Right ventricle myocardium superior (tissue), 1 donor: ENCODE measurements at regions of chr10 and their contacts with region 1.

Region 1: DNA sequence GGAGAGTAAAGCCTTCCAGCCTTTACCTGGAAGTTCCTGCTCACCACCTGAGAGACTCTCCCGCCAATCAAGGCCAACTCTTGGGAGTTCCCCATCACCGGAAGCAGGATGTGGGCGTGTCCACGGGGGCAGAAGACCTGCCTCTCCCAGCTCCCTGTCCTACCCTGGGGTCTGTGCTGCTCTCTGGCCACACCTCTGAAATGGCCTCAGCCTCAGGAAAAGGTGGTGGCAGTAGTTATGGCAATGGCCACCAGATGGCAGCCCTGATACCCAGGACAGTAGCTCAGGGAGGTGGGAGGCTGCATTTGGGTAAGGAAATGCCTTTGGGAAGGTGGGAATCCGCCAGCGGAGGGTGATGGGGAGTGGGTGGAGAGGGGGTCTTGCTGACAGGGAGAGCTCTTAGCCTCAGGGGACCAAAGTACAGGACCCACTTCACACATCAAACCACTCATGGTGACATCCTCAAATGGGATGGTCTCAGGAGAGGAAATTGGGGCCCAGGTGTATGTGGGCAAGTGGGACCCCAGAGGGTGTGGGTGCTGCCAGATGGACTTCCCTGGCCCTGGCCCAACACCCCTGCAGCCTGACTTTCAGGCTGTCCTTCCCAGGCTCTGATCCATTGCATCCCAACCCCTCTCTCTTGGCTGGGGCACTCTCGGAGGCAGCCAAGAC is 33.9 kb downstream of the KAZALD1 start:
- DNase-seq: peak; percentile 78
- ATAC-seq: peak; percentile 82

Region 2: GRCh38 chr10:101141616-101142532 is 46.2 kb after region 1 on chr10:
- intact Hi-C with region 1: loop called (anchors 2 kb)
- DNase-seq: peak; percentile 87
- ATAC-seq: peak; percentile 95